AG04449 (cell line): ENCODE measurements at regions of chr9 and their contacts with region 1.

Region 1: GRCh38 chr9:2241836-2242741 is 226.9 kb downstream of the SMARCA2 start:
- DNase-seq: peak; percentile 31
- H3K4me3 ChIP-seq: peak overlapping the region; percentile 63
- CTCF ChIP-seq: no peak

Region 2: GRCh38 chr9:2229109-2229721 is 12.9 kb before region 1 on chr9:
- CTCF ChIA-PET with region 1: interaction called, 17 read pairs
- POLR2A ChIA-PET with region 1: no interaction called
- DNase-seq: no peak
- H3K4me3 ChIP-seq: no peak overlapping the region
- CTCF ChIP-seq: no peak